Panc1 (cell line): ENCODE measurements at regions of chr13 and their contacts with region 1.

Region 1: DNA sequence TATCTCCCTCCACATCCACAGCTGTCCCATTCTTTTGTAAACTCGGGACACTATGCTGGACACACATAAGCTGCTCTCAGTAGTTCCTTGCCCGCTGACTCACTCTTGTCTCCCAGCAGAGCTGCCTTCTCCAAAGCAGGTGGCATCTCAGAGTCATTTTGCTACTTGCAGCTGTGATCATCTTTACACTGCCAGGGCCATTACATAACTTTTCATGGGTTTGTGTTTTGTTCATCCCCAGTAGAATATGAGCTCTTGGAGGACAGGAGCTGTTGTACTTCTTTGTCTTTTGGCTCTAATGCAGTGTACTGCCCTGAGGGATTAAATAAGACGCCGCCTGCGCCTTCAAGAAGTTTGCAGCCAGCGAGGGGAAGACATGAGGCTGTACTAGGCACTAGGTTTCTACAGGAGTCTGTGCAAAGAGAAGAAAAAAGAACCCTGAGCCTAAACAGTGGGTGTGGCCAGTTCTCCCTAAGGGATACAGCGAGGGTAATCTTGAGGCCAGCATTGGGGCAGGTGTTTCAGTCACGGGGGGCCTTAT is 40.8 kb upstream of the GPR183 start:
- DNase-seq: no peak
- ATAC-seq: no peak
- H3K4me3 ChIP-seq: no peak overlapping the region
- H3K27ac ChIP-seq: no peak overlapping the region
- H3K4me1 ChIP-seq: no peaks in the 10 kb centered on the region
- H3K27me3 ChIP-seq: no peaks in the 10 kb centered on the region
- CTCF ChIP-seq: no peak

Region 2: GRCh38 chr13:98549006-98549727 is 798.8 kb before region 1 on chr13:
- CTCF ChIA-PET with region 1: no interaction called
- POLR2A ChIA-PET with region 1: no interaction called
- in situ Hi-C with region 1: no loop called
- intact Hi-C with region 1: no loop called
- DNase-seq: no peak
- ATAC-seq: no peak
- H3K4me3 ChIP-seq: no peak overlapping the region
- H3K27ac ChIP-seq: no peak overlapping the region
- H3K4me1 ChIP-seq: peaks cover 4% of the 10 kb centered on the region; the same call in 1 of the 2 replicates
- H3K27me3 ChIP-seq: no peaks in the 10 kb centered on the region
- CTCF ChIP-seq: no peak

Region 3: GRCh38 chr13:99376132-99376531 is 28.2 kb after region 1 on chr13:
- CTCF ChIA-PET with region 1: interaction called, 16 read pairs
- POLR2A ChIA-PET with region 1: no interaction called
- in situ Hi-C with region 1: no loop called
- intact Hi-C with region 1: no loop called
- DNase-seq: no peak
- ATAC-seq: no peak
- H3K4me3 ChIP-seq: no peak overlapping the region
- H3K27ac ChIP-seq: no peak overlapping the region
- H3K4me1 ChIP-seq: no peaks in the 10 kb centered on the region
- H3K27me3 ChIP-seq: no peaks in the 10 kb centered on the region
- CTCF ChIP-seq: no peak